CD8-positive, alpha-beta T cell (primary cell): ENCODE measurements at regions of chr1 and their contacts with region 1.

Region 1: GRCh38 chr1:222713091-222713961 is 962 bp downstream of the BROX start:
- DNase-seq: peak; percentile 87 to 98 (median 94)
- ATAC-seq: peak; percentile 75
- H3K4me3 ChIP-seq: peak overlapping the region; percentile 90 to 94
- H3K4me3 Mint-ChIP-seq: peak overlapping the region; percentile 96
- H3K27ac ChIP-seq: peak overlapping the region; percentile 93 to 99
- H3K27ac Mint-ChIP-seq: peak overlapping the region; percentile 100
- H3K4me1 ChIP-seq: peaks cover 22% of the 10 kb centered on the region
- H3K4me1 Mint-ChIP-seq: peaks cover 54% of the 10 kb centered on the region
- H3K27me3 ChIP-seq: no peaks in the 10 kb centered on the region
- H3K27me3 Mint-ChIP-seq: no peaks in the 10 kb centered on the region
- CTCF ChIP-seq: no peak

Region 2: DNA sequence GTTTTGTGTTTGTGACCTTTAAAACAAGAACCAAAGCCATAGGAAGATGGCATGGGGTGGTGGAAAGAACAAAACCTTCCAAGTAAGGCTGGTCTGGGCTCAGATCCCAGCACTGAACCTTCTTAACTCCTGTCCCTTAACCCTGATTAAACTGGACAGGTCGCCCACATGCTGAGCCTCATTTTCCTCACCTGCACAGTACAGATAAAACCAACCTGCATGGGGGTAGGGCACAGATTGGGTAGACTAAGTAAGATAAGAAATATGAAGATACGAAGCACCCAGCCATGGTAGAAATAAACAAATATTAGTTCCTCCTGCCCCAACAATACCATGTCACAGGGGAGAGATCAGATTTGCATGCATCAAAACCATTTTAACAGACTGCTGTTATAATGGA is 274.7 kb before region 1 on chr1:
- CTCF ChIA-PET with region 1: no interaction called
- POLR2A ChIA-PET with region 1: no interaction called
- intact Hi-C with region 1: no loop called
- DNase-seq: no peak
- ATAC-seq: no peak
- H3K4me3 ChIP-seq: no peak overlapping the region
- H3K4me3 Mint-ChIP-seq: no peak overlapping the region
- H3K27ac ChIP-seq: no peak overlapping the region
- H3K27ac Mint-ChIP-seq: no peak overlapping the region
- H3K4me1 ChIP-seq: peaks cover 5% of the 10 kb centered on the region
- H3K4me1 Mint-ChIP-seq: peaks cover 14% of the 10 kb centered on the region
- H3K27me3 ChIP-seq: no peaks in the 10 kb centered on the region
- H3K27me3 Mint-ChIP-seq: no peaks in the 10 kb centered on the region
- CTCF ChIP-seq: no peak

Region 3: GRCh38 chr1:222589462-222590302 is 123.6 kb before region 1 on chr1 and contains the start of gene TAF1A:
- CTCF ChIA-PET with region 1: interaction called, 6 read pairs
- POLR2A ChIA-PET with region 1: interaction called, 24 read pairs
- intact Hi-C with region 1: loop called (anchors 1 kb)
- DNase-seq: peak; percentile 69 to 93 (median 86)
- ATAC-seq: peak; percentile 98
- H3K4me3 ChIP-seq: peak within 1 kb of the TSS; percentile 68 to 77
- H3K4me3 Mint-ChIP-seq: peak within 1 kb of the TSS; percentile 98
- H3K27ac ChIP-seq: peak within 1 kb of the TSS; percentile 85 to 87
- H3K27ac Mint-ChIP-seq: peak within 1 kb of the TSS; percentile 99
- H3K4me1 ChIP-seq: peaks cover 11% of the 10 kb centered on the region
- H3K4me1 Mint-ChIP-seq: peaks cover 52% of the 10 kb centered on the region
- H3K27me3 ChIP-seq: no peaks in the 10 kb centered on the region
- H3K27me3 Mint-ChIP-seq: no peaks in the 10 kb centered on the region
- CTCF ChIP-seq: no peak
- total RNA-seq, gene TAF1A: 5.3 to 5.6 TPM

Region 4: GRCh38 chr1:222643938-222644635 is 69.2 kb before region 1 on chr1:
- CTCF ChIA-PET with region 1: interaction called, 3 read pairs
- POLR2A ChIA-PET with region 1: interaction called, 27 read pairs
- intact Hi-C with region 1: loop called (anchors 1 kb)
- DNase-seq: peak; percentile 93 to 99 (median 98)
- ATAC-seq: peak; percentile 87
- H3K4me3 ChIP-seq: peak overlapping the region; percentile 90 to 96
- H3K4me3 Mint-ChIP-seq: peak overlapping the region; percentile 96
- H3K27ac ChIP-seq: peak overlapping the region; percentile 96 to 99
- H3K27ac Mint-ChIP-seq: peak overlapping the region; percentile 99
- H3K4me1 ChIP-seq: peaks cover 29% of the 10 kb centered on the region
- H3K4me1 Mint-ChIP-seq: peaks cover 38% of the 10 kb centered on the region
- H3K27me3 ChIP-seq: no peaks in the 10 kb centered on the region
- H3K27me3 Mint-ChIP-seq: no peaks in the 10 kb centered on the region
- CTCF ChIP-seq: no peak

Region 5: DNA sequence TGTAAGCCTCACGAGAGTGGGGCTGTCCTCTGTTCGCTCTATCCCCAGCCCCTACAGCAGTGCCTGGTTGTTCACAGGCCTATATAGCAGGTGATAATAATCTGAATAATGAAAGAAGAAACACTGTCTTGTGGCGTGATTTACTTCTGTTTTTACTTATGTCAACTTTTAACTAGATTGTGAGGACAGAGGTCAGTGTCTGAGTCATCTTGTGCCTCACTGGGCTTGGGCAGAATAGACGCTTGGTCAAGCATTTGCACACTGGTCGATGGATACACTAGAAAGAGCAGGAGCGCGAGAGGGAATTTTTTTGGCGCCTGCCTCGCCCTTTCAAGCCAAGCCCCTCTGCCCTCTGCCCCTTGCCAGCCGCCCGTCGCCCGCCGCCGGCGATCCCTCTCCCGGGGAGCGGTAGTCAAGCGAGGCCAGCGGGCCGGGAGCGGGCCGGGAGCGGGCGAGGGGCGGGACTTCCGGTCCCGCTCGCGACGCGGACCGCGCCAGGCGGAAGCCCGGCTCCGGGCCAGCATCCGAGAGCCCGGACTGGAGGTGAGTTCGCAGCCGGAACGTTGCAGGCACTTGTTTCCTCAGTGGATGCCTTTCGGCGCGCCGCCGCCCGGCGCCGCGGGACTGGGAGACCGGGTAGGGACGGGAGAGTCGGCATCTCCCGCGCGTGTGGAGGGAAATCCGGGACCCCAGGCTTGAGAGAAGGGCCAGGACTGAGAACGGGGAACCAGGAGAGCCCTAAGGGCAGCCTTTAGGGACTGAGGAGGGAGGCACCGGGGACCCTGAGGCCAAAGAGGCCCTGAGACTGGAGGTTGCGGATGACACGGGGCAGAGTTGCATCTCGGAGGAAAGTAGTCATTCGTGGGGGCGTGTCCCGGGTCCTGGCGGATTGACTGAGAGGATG is 101.5 kb after region 1 on chr1 and contains the start of gene DISP1:
- CTCF ChIA-PET with region 1: no interaction called
- POLR2A ChIA-PET with region 1: no interaction called
- intact Hi-C with region 1: loop called (anchors 5 kb)
- DNase-seq: peak; percentile 35 to 86 (median 66)
- ATAC-seq: peak; percentile 79
- H3K4me3 ChIP-seq: peak within 1 kb of the TSS; percentile 91 to 98
- H3K4me3 Mint-ChIP-seq: peak within 1 kb of the TSS; percentile 92
- H3K27ac ChIP-seq: peak within 1 kb of the TSS; percentile 75 to 83
- H3K27ac Mint-ChIP-seq: peak within 1 kb of the TSS; percentile 92
- H3K4me1 ChIP-seq: peaks cover 13% of the 10 kb centered on the region
- H3K4me1 Mint-ChIP-seq: peaks cover 25% of the 10 kb centered on the region
- H3K27me3 ChIP-seq: no peaks in the 10 kb centered on the region
- H3K27me3 Mint-ChIP-seq: no peaks in the 10 kb centered on the region
- CTCF ChIP-seq: no peak
- total RNA-seq, gene DISP1: 0.73 to 1.0 TPM

Region 6: DNA sequence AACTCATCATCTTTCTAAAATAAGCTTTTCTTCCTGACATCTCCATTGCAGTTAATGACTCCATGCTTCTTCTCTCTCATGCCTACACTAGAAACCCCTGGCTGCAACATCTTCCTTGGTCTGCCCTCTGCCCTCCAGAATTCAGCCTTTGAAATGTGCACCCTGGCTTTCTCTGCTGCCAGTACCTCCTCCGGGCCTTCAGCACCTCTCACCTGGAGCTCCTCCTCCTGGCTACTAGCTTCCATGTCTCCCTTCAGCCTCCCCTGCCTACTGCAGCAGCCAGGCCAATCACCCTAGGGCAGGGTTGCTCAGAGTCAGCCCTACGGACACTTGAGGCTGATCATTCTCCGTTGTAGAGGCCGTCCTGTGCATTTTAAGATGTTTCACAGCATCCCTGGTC is 632.4 kb after region 1 on chr1:
- CTCF ChIA-PET with region 1: no interaction called
- POLR2A ChIA-PET with region 1: no interaction called
- intact Hi-C with region 1: no loop called
- DNase-seq: no peak
- ATAC-seq: no peak
- H3K4me3 ChIP-seq: no peak overlapping the region
- H3K4me3 Mint-ChIP-seq: no peak overlapping the region
- H3K27ac ChIP-seq: no peak overlapping the region
- H3K27ac Mint-ChIP-seq: no peak overlapping the region
- H3K4me1 ChIP-seq: no peaks in the 10 kb centered on the region
- H3K4me1 Mint-ChIP-seq: no peaks in the 10 kb centered on the region
- H3K27me3 ChIP-seq: no peaks in the 10 kb centered on the region
- H3K27me3 Mint-ChIP-seq: no peaks in the 10 kb centered on the region
- CTCF ChIP-seq: no peak

Region 7: GRCh38 chr1:224182866-224183590 is 1469.7 kb after region 1 on chr1 and contains the start of gene DEGS1:
- CTCF ChIA-PET with region 1: no interaction called
- POLR2A ChIA-PET with region 1: no interaction called
- intact Hi-C with region 1: loop called in 1 of 2 experiments (anchors 5 kb)
- DNase-seq: peak; percentile 71 to 92 (median 84)
- ATAC-seq: peak; percentile 77
- H3K4me3 ChIP-seq: peak within 1 kb of the TSS; percentile 70 to 90
- H3K4me3 Mint-ChIP-seq: peak within 1 kb of the TSS; percentile 90
- H3K27ac ChIP-seq: peak within 1 kb of the TSS; percentile 88 to 94
- H3K27ac Mint-ChIP-seq: peak within 1 kb of the TSS; percentile 95
- H3K4me1 ChIP-seq: peaks cover 33% of the 10 kb centered on the region
- H3K4me1 Mint-ChIP-seq: peaks cover 48% of the 10 kb centered on the region
- H3K27me3 ChIP-seq: no peaks in the 10 kb centered on the region
- H3K27me3 Mint-ChIP-seq: no peaks in the 10 kb centered on the region
- CTCF ChIP-seq: no peak
- total RNA-seq, gene DEGS1: 52.1 to 54.7 TPM